ENCODE measurements at regions of chr2 and their contacts with region 1.

Region 1: GRCh38 chr2:177275041-177276020 is 10.8 kb upstream of the NFE2L2 start:
- DNase-seq: peak; percentile 86
- H3K4me3 ChIP-seq: peak overlapping the region in 1 of 3 experiments; percentile 27
- H3K27ac ChIP-seq: peak overlapping the region; percentile 39
- H3K4me1 ChIP-seq: peaks cover 25% of the 10 kb centered on the region
- H3K27me3 ChIP-seq: no peaks in the 10 kb centered on the region
- CTCF ChIP-seq: no peak
- POLR2A ChIP-seq: no peak

Region 2: GRCh38 chr2:176804392-176804791 is 470.9 kb before region 1 on chr2:
- CTCF ChIA-PET with region 1: no interaction called
- POLR2A ChIA-PET with region 1: no interaction called
- dilution Hi-C with region 1: no loop called
- intact Hi-C with region 1: no loop called
- DNase-seq: no peak
- H3K4me3 ChIP-seq: no peak overlapping the region
- H3K27ac ChIP-seq: no peak overlapping the region
- H3K4me1 ChIP-seq: no peaks in the 10 kb centered on the region
- H3K27me3 ChIP-seq: peaks cover 0 to 1% of the 10 kb centered on the region in 2 experiments
- CTCF ChIP-seq: no peak
- POLR2A ChIP-seq: no peak

Region 3: DNA sequence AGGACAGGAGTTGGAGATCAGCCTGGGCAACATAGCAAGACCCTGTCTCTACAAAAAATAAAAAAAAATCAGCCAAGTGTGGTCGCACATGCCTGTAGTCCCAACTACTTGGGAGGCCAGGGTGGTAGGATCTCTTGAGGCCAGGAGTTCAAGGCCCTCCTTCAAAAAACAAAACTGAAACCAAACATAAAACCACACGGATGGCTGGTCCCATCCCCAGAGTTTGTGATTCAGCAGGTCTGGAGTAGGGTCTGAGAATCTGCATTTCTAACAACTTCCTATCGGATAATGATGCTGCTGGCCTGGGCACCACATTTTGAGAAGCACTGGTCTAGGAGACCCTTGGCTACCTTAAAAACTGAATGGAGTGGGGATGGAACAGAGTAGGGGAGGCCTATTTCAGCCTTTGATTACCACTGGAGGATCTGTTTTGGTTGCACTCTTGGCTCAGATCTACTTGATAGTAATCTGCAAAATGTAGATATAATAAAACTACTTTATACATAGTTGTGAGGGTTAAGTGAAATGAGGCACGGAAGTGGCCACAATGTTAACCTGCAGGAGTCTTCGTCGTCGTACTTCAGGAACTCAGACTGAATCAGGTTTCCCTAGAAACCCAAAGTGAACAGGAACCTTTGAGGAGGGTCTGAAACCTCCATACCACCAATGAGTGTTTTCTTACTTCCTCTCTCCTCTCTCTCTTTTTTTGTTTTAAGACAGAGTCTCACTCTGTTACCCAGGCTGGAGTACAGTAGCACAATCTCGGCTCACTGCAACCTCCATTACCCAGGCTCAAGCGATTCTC is 14.7 kb after region 1 on chr2:
- CTCF ChIA-PET with region 1: interaction called, 14 read pairs
- POLR2A ChIA-PET with region 1: no interaction called
- dilution Hi-C with region 1: no loop called
- intact Hi-C with region 1: loop called (anchors 2 kb)
- DNase-seq: no peak
- H3K4me3 ChIP-seq: no peak overlapping the region
- H3K27ac ChIP-seq: no peak overlapping the region
- H3K4me1 ChIP-seq: no peaks in the 10 kb centered on the region
- H3K27me3 ChIP-seq: no peaks in the 10 kb centered on the region
- CTCF ChIP-seq: no peak
- POLR2A ChIP-seq: no peak